Right cardiac atrium (tissue), 5 donors: ENCODE measurements at regions of chr5 and their contacts with region 1.

Region 1: DNA sequence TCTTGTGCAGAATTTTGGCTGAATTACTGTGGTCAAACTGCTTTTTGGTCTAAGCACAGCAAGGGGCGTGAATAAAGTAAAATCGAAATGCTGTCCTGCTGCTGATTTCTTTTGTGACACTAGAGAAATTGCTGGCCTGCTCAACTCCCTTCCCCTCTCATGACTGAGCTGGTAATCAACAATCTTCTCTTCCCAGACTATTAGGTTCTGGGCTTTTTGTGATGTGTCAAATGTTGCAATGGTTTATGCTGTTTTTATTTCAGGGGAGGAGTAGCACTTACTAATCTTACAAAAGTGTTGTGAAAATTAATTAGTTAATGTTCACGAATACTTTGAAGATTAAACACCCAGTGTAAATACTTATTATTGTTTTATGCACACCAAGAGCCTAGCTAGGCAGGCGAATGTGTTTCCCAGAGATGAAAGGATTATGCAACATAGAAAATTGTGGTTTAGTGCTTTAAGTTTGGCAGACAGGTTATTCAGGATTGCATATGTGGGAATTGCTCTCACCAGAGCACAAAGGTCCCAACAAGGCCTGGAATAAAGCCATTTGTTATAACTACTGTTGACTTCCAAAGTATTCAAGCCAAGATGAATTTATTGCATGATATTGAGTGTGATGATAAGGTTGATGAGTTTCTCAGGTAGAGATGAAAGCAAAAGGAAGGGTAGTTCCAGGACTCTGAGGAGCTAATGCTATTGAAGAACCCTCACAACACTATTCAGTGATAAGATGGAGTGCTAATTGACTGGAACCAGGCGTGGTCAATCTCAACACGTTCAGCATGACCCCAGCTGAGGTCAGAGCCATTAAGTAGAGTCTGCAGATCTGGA is 280.7 kb upstream of the ZNF608 start:
- DNase-seq: no peak
- ATAC-seq: peak; percentile 64 to 86
- H3K4me3 ChIP-seq: no peak overlapping the region
- H3K27ac ChIP-seq: no peak overlapping the region
- H3K4me1 ChIP-seq: no peaks in the 10 kb centered on the region
- H3K27me3 ChIP-seq: no peaks in the 10 kb centered on the region

Region 2: DNA sequence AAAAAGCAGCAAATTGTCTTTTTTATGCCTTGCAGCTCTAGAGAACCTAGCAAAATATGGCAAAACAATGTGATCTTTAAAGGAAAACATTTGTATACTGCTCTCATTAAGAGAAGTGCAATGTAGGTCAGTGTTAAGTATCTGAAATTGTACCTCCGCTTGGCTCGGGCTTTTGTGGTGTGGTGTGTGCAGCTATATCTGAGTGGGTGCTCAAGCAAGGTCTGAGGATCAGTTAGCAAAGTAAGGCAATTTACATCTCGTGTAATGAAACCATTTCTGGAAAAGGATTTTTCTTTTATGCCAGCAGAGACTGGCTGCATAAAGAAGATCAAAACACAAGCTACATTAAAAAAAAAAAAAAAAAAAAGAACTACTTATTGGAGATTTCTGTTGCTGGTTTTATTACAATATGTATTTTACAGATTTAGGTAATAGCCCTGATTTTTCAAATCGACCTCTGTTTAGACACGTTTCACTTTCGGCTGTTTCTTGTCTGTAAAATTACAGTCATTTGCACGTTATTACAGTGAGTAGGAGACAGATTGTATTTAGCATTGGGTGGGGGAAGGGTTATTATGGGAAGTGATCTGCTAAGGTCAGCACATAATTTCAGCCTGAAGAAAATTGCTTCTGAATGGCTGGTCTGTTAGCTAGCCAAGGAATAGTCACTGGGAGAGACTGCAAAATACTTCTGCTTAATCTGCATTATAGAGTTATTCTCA is 272.7 kb before region 1 on chr5:
- intact Hi-C with region 1: loop called in 1 of 4 experiments (anchors 5 kb)
- DNase-seq: no peak
- ATAC-seq: no peak
- H3K4me3 ChIP-seq: no peak overlapping the region
- H3K27ac ChIP-seq: no peak overlapping the region
- H3K4me1 ChIP-seq: no peaks in the 10 kb centered on the region
- H3K27me3 ChIP-seq: no peaks in the 10 kb centered on the region

Region 3: DNA sequence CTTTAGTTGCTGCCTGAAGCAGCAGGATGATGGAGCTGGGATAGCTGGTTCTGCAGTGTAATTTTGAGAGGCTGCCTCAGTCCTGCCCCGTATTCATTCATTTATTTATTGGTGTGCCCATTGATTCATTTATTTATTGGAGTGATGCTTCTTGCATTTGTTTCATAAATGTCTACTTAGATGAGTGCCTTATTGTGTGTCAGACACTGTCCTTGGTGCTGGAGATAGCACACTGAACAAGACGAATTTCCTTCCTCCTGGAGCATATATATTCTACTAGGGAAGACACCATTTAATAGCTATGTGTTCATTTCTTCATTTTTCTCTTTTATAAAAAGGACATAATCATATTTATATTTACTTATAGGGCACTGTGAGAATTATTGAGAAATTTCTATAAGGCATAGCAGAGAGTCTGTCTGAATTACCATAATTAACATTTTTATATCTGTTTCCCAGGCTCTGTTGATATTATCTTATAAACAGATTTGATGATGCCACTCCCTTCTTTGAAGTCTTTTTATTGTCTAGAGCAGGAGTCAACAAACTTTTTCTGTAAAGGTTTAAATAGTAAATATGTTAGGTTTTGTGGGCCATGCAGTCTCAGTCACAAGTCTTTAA is 153.2 kb after region 1 on chr5:
- intact Hi-C with region 1: no loop called
- DNase-seq: no peak
- ATAC-seq: no peak
- H3K4me3 ChIP-seq: no peak overlapping the region
- H3K27ac ChIP-seq: no peak overlapping the region
- H3K4me1 ChIP-seq: no peaks in the 10 kb centered on the region
- H3K27me3 ChIP-seq: no peaks in the 10 kb centered on the region